CD4-positive, alpha-beta T cell (primary cell): ENCODE measurements at regions of chr17 and their contacts with region 1.

Region 1: DNA sequence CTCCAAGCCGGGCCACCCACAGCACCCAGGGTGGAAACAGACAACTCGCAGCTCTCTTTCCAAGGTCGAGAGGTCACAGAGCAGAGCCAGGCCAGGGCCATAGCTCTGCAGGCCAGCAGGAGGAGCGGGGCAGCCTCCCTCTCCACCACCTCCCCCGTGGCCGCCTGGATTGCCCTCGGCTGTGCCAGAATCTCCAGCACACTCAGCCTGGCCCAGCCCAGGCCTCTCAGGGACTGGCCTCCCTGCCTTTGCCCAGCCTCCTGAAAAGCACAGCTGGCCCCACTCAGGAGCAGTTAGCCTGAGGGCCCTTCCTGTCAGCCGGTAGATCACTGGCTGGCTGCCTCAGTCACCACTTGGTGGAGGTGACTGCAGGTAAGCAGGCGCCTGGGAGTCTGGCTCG is 85.8 kb upstream of the SEC14L1 start:
- DNase-seq: no peak
- ATAC-seq: no peak
- H3K4me3 ChIP-seq: no peak overlapping the region
- H3K4me3 Mint-ChIP-seq: no peak overlapping the region
- H3K27ac ChIP-seq: no peak overlapping the region
- H3K27ac Mint-ChIP-seq: no peak overlapping the region
- H3K4me1 ChIP-seq: peaks cover 4% of the 10 kb centered on the region
- H3K4me1 Mint-ChIP-seq: no peaks in the 10 kb centered on the region
- H3K27me3 ChIP-seq: peaks cover 3 to 4% of the 10 kb centered on the region in 2 experiments
- H3K27me3 Mint-ChIP-seq: peaks cover 15% of the 10 kb centered on the region
- CTCF ChIP-seq: no peak

Region 2: DNA sequence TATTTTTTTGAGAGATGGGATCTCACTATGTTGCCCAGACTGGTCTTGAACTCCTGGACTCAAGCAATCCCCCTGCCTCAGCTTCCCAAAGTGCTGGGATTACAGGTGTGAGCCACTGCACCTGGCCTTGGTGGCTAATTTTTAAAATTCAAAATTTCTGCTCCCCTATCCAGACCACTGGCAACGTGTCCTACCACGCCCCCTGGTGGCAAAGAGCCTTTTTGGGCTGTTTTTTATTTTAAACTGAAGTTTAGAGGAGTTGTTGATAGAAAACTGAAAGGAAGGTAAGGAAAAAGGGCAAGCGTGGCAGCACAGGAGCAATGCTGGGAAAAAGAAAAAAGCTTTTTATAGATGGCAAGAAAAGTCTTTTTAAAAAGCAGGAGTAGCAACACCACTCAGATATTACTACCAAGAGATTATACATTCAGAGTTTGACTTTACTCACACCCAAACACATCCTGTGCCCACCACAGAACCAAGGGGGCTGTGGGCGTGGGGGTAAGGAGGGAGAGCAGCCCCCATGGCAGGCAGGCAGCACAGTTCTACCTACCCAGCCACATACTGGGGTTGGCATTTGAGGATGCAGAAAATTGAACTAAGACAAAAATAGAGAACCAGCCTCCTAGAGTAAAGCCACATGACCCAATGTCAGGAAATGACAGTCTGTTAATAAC is 340.0 kb before region 1 on chr17:
- CTCF ChIA-PET with region 1: interaction called, 9 read pairs
- POLR2A ChIA-PET with region 1: no interaction called
- intact Hi-C with region 1: loop called in 1 of 2 experiments (anchors 5 kb)
- DNase-seq: peak; percentile 64 to 87 (median 79)
- ATAC-seq: no peak
- H3K4me3 ChIP-seq: no peak overlapping the region
- H3K4me3 Mint-ChIP-seq: peak overlapping the region; percentile 3
- H3K27ac ChIP-seq: no peak overlapping the region
- H3K27ac Mint-ChIP-seq: peak overlapping the region; percentile 96
- H3K4me1 ChIP-seq: peaks cover 33% of the 10 kb centered on the region
- H3K4me1 Mint-ChIP-seq: peaks cover 42% of the 10 kb centered on the region
- H3K27me3 ChIP-seq: no peaks in the 10 kb centered on the region
- H3K27me3 Mint-ChIP-seq: no peaks in the 10 kb centered on the region
- CTCF ChIP-seq: peak; percentile 88

Region 3: GRCh38 chr17:76816590-76817135 is 238.3 kb before region 1 on chr17:
- CTCF ChIA-PET with region 1: interaction called, 4 read pairs
- POLR2A ChIA-PET with region 1: no interaction called
- intact Hi-C with region 1: loop called in 1 of 2 experiments (anchors 2 kb)
- DNase-seq: peak; percentile 43 to 77 (median 56)
- ATAC-seq: peak; percentile 98
- H3K4me3 ChIP-seq: no peak overlapping the region
- H3K4me3 Mint-ChIP-seq: no peak overlapping the region
- H3K27ac ChIP-seq: no peak overlapping the region
- H3K27ac Mint-ChIP-seq: no peak overlapping the region
- H3K4me1 ChIP-seq: peaks cover 7% of the 10 kb centered on the region
- H3K4me1 Mint-ChIP-seq: peaks cover 9% of the 10 kb centered on the region
- H3K27me3 ChIP-seq: no peaks in the 10 kb centered on the region
- H3K27me3 Mint-ChIP-seq: no peaks in the 10 kb centered on the region
- CTCF ChIP-seq: peak; percentile 71

Region 4: GRCh38 chr17:76868176-76868668 is 186.7 kb before region 1 on chr17 and contains the start of gene MGAT5B:
- CTCF ChIA-PET with region 1: interaction called, 54 read pairs
- POLR2A ChIA-PET with region 1: interaction called, 18 read pairs
- intact Hi-C with region 1: loop called (anchors 1 kb)
- DNase-seq: peak; percentile 56 to 91 (median 74)
- ATAC-seq: peak; percentile 95
- H3K4me3 ChIP-seq: no peak within 1 kb of the TSS
- H3K4me3 Mint-ChIP-seq: peak within 1 kb of the TSS; percentile 88
- H3K27ac ChIP-seq: no peak within 1 kb of the TSS
- H3K27ac Mint-ChIP-seq: no peak within 1 kb of the TSS
- H3K4me1 ChIP-seq: peaks cover 13% of the 10 kb centered on the region
- H3K4me1 Mint-ChIP-seq: peaks cover 16% of the 10 kb centered on the region
- H3K27me3 ChIP-seq: peaks cover 24 to 41% of the 10 kb centered on the region in 2 experiments
- H3K27me3 Mint-ChIP-seq: peaks cover 37% of the 10 kb centered on the region
- CTCF ChIP-seq: no peak
- total RNA-seq, gene MGAT5B: 0.28 to 0.77 TPM

Region 5: GRCh38 chr17:76911299-76912017 is 143.5 kb before region 1 on chr17:
- CTCF ChIA-PET with region 1: no interaction called
- POLR2A ChIA-PET with region 1: no interaction called
- intact Hi-C with region 1: no loop called
- DNase-seq: no peak
- ATAC-seq: no peak
- H3K4me3 ChIP-seq: no peak overlapping the region
- H3K4me3 Mint-ChIP-seq: no peak overlapping the region
- H3K27ac ChIP-seq: no peak overlapping the region
- H3K27ac Mint-ChIP-seq: no peak overlapping the region
- H3K4me1 ChIP-seq: no peaks in the 10 kb centered on the region
- H3K4me1 Mint-ChIP-seq: no peaks in the 10 kb centered on the region
- H3K27me3 ChIP-seq: no peaks in the 10 kb centered on the region
- H3K27me3 Mint-ChIP-seq: peaks cover 11% of the 10 kb centered on the region
- CTCF ChIP-seq: no peak

Region 6: GRCh38 chr17:76957678-76958464 is 97.1 kb before region 1 on chr17:
- CTCF ChIA-PET with region 1: no interaction called
- POLR2A ChIA-PET with region 1: no interaction called
- intact Hi-C with region 1: loop called in 1 of 2 experiments (anchors 5 kb)
- DNase-seq: no peak
- ATAC-seq: no peak
- H3K4me3 ChIP-seq: no peak overlapping the region
- H3K4me3 Mint-ChIP-seq: no peak overlapping the region
- H3K27ac ChIP-seq: no peak overlapping the region
- H3K27ac Mint-ChIP-seq: no peak overlapping the region
- H3K4me1 ChIP-seq: no peaks in the 10 kb centered on the region
- H3K4me1 Mint-ChIP-seq: no peaks in the 10 kb centered on the region
- H3K27me3 ChIP-seq: no peaks in the 10 kb centered on the region
- H3K27me3 Mint-ChIP-seq: no peaks in the 10 kb centered on the region
- CTCF ChIP-seq: no peak

Region 7: DNA sequence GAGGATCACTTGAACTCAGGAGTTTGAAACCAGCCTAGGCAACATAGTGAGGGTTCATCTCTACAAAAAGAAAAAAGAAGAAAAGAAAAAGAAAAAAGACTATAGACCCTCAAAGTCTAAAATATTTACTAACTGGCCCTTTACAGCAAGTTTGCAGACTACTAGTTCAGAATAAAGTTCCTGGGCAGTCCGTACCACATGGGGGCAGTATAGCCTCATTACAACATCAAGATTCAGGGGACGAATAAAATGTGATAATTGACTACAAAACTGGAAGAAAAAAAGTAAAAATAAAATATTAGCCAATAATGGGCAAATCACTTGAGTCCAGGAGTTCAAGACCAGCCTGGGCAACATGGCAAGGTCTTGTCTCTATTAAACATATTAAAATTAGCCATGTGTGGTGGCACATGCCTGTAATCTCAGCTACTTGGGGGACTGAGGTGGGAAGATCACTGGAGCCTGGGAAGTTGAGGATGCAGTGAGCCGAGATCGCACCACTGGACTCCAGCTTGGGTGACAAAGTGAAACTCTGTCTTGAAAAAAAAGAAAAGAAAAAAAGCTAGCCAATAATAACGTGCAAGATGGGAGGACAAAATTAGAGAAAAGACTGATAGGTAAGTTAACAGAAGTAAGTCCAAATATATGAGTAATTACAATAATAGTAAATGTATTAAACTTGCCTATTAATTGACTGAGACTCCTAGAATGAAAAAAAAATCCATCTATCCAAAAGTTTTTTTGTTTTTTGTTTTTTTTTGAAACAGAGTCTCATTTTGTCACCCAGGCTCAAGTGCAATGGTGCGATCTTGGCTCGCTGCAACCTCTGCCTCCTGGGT is 43.5 kb before region 1 on chr17:
- CTCF ChIA-PET with region 1: interaction called, 7 read pairs
- POLR2A ChIA-PET with region 1: no interaction called
- intact Hi-C with region 1: loop called (anchors 1 to 2 kb)
- DNase-seq: peak; percentile 31 to 74 (median 46)
- ATAC-seq: no peak
- H3K4me3 ChIP-seq: no peak overlapping the region
- H3K4me3 Mint-ChIP-seq: no peak overlapping the region
- H3K27ac ChIP-seq: no peak overlapping the region
- H3K27ac Mint-ChIP-seq: no peak overlapping the region
- H3K4me1 ChIP-seq: no peaks in the 10 kb centered on the region
- H3K4me1 Mint-ChIP-seq: no peaks in the 10 kb centered on the region
- H3K27me3 ChIP-seq: no peaks in the 10 kb centered on the region
- H3K27me3 Mint-ChIP-seq: no peaks in the 10 kb centered on the region
- CTCF ChIP-seq: peak; percentile 67

Region 8: DNA sequence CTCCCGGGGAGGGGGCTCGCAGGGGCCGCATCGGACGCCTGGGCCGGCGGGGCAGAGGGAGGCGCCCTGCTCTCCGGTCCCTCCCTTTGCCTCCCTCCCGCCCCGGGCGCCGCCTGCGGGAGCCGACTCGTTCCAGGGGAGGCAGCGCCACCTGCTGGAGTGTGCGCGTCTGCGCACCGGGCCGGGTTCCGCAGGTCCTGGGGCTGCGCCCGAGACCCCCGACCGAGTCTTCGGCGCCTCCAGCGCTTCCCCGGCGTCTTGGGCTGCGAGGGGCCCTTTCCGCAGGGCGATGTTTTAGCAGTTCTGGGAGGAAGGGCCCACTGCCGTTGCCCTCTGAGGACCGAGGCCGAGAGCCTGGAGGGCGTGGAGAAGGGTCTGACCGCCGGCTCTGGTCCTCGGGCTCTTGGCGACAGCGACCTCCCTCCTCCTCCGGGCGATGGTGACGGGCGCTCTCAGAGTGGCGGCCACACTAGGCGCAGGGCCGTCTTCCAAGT is 192.2 kb after region 1 on chr17:
- CTCF ChIA-PET with region 1: no interaction called
- POLR2A ChIA-PET with region 1: no interaction called
- intact Hi-C with region 1: loop called in 1 of 2 experiments (anchors 1 kb)
- DNase-seq: peak; percentile 73 to 92 (median 87)
- ATAC-seq: peak; percentile 99
- H3K4me3 ChIP-seq: peak overlapping the region; percentile 47
- H3K4me3 Mint-ChIP-seq: no peak overlapping the region
- H3K27ac ChIP-seq: no peak overlapping the region
- H3K27ac Mint-ChIP-seq: no peak overlapping the region
- H3K4me1 ChIP-seq: peaks cover 14% of the 10 kb centered on the region
- H3K4me1 Mint-ChIP-seq: peaks cover 8% of the 10 kb centered on the region
- H3K27me3 ChIP-seq: peaks cover 8 to 9% of the 10 kb centered on the region in 2 experiments
- H3K27me3 Mint-ChIP-seq: peaks cover 25% of the 10 kb centered on the region
- CTCF ChIP-seq: peak; percentile 98